ENCODE measurements at regions of chr2 and their contacts with region 1.

Region 1: DNA sequence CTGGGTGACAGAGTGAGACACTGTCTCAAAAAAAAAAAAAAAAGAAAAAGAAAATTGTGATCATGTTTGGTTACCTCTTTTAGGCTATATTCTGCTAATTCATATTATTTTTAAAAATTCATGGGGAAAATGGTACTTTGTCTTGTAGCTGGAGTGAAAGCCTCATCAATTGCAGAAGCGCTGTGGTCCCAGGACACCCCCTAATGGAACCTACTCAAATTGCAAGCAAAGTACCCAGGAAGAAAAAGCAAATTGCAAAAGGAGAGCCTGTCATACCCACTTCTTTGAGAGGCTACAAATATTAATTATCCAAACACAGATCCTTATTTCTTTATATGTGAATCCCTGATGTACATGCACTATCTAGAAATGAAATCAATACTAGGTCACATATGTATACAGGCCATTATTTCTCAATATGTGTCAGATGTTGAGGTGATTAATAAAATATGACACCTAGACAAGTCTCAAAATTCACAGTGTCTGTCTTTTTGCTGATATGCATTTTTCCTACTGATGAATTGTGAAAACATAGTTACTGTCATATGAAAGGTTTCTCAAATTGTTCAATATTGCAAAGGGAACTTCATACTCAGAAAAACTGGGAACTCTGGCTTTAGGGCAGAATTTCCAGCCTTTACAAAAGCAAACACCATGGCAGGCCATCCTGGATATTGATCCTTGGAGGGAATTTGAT is 12.6 kb downstream of the CRACDL start:
- DNase-seq: no peak
- ATAC-seq: no peak
- H3K4me3 ChIP-seq: no peak overlapping the region
- H3K27ac ChIP-seq: no peak overlapping the region
- H3K4me1 ChIP-seq: no peaks in the 10 kb centered on the region
- H3K27me3 ChIP-seq: peaks cover 2 to 16% of the 10 kb centered on the region in 2 experiments; a peak in 2 of 5 replicates
- CTCF ChIP-seq: peak; percentile 53
- EP300 ChIP-seq: no peak
- POLR2A ChIP-seq: no peak
- RAD21 ChIP-seq: no peak

Region 2: GRCh38 chr2:98649135-98649991 is 274.0 kb before region 1 on chr2:
- CTCF ChIA-PET with region 1: interaction called, 3 read pairs
- POLR2A ChIA-PET with region 1: no interaction called
- in situ Hi-C with region 1: no loop called
- intact Hi-C with region 1: loop called (anchors 10 kb)
- DNase-seq: peak; percentile 83
- ATAC-seq: peak; percentile 99
- H3K4me3 ChIP-seq: no peak overlapping the region
- H3K27ac ChIP-seq: no peak overlapping the region
- H3K4me1 ChIP-seq: peaks cover 10% of the 10 kb centered on the region; the same call in 1 of the 2 replicates
- H3K27me3 ChIP-seq: no peaks in the 10 kb centered on the region
- CTCF ChIP-seq: peak; percentile 96
- EP300 ChIP-seq: no peak
- POLR2A ChIP-seq: no peak
- RAD21 ChIP-seq: peak; percentile 98

Region 3: DNA sequence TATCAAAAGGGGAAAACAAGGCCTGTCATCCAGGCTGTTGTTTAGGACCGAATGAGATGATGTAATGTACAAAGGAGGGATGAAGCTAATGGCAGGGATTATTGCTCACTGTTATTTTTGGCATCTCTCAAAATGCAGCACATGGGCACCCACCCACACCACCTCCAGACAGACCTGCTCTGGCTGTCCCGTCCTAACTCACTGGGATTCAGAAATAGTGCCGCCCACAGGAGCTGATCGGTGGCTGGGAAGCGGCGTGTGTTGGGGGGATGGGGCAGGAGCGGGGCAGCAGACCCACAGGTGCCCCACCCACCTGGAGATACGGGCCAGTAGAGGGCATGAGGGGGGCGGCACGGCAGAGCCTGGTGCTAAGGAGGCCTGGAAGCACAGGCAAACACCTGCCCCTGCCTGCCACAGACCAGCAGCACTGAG is 39.6 kb before region 1 on chr2:
- CTCF ChIA-PET with region 1: interaction called, 4 read pairs
- POLR2A ChIA-PET with region 1: no interaction called
- in situ Hi-C with region 1: no loop called
- intact Hi-C with region 1: loop called (anchors 1 kb)
- DNase-seq: no peak
- ATAC-seq: peak; percentile 48
- H3K4me3 ChIP-seq: no peak overlapping the region
- H3K27ac ChIP-seq: no peak overlapping the region
- H3K4me1 ChIP-seq: no peaks in the 10 kb centered on the region
- H3K27me3 ChIP-seq: peaks cover 2 to 40% of the 10 kb centered on the region in 2 experiments; a peak in 3 of 5 replicates
- CTCF ChIP-seq: 0 out of 2 replicates have a peak, but pooled peaks have one; percentile 12
- EP300 ChIP-seq: no peak
- POLR2A ChIP-seq: no peak
- RAD21 ChIP-seq: no peak

Measured in HepG2 (cell line).